GM12878 (cell line): ENCODE measurements at regions of chr18 and their contacts with region 1.

Region 1: DNA sequence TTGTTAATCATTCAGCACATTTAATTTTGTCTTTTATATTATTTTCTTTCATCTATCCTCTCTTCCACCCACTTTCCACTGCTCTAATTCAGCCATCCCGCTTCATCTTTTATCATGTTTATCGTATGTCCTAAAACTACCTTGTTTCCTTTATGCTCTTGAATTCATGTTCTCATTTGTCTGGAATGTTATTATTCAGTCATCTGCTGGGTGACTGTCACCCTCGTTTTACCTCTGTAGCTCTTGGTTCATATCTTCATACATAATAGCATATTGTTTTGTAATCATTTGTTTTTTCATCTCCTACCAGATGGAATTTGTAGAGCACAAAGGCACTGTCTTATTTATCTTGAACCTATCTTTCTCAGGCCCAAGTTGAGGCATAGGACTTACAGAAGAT is 37.0 kb downstream of the SMCHD1 start:
- DNase-seq: no peak
- ATAC-seq: no peak
- H3K4me3 ChIP-seq: no peak overlapping the region
- H3K27ac ChIP-seq: no peak overlapping the region
- H3K4me1 ChIP-seq: no peaks in the 10 kb centered on the region
- H3K27me3 ChIP-seq: no peaks in the 10 kb centered on the region
- CTCF ChIP-seq: no peak
- EP300 ChIP-seq: no peak
- POLR2A ChIP-seq: no peak
- RAD21 ChIP-seq: no peak

Region 2: DNA sequence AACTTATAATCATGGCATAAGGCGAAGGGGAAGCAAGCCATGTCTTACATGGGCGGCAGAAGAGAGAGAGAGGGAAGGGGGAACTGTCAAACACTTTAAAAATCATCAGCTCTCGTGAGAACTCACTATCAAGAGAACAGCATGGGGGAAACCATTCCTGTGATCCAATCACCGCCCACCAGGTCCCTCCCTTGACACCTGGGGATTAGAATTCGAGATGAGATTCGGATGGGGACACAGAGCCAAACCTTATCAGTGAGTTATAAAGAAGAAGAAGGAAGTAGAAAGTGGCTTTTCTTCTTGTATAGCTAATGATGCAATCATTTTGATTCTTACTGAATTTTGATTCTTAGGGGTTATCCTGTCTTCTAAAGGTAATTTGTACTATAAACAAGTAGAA is 14.4 kb after region 1 on chr18:
- CTCF ChIA-PET with region 1: interaction called, 13 read pairs
- POLR2A ChIA-PET with region 1: no interaction called
- RAD21 ChIA-PET with region 1: no interaction called
- SMC1A ChIA-PET with region 1: interaction called, 6 read pairs
- in situ Hi-C with region 1: no loop called
- intact Hi-C with region 1: no loop called
- DNase-seq: no peak
- ATAC-seq: no peak
- H3K4me3 ChIP-seq: no peak overlapping the region
- H3K27ac ChIP-seq: no peak overlapping the region
- H3K4me1 ChIP-seq: no peaks in the 10 kb centered on the region
- H3K27me3 ChIP-seq: no peaks in the 10 kb centered on the region
- CTCF ChIP-seq: no peak
- EP300 ChIP-seq: no peak
- POLR2A ChIP-seq: no peak
- RAD21 ChIP-seq: no peak